Naive thymus-derived CD4-positive, alpha-beta T cell (primary cell): ENCODE measurements at regions of chr5 and their contacts with region 1.

Region 1: GRCh38 chr5:142012792-142013388 is at the start of gene GNPDA1:
- DNase-seq: peak; percentile 38 to 81 (median 54)
- ATAC-seq: peak; percentile 87
- H3K4me3 ChIP-seq: peak within 1 kb of the TSS; percentile 68
- H3K4me3 Mint-ChIP-seq: peak within 1 kb of the TSS; percentile 76 to 93 (median 88)
- H3K27ac ChIP-seq: peak within 1 kb of the TSS; percentile 76
- H3K27ac Mint-ChIP-seq: peak within 1 kb of the TSS; percentile 87 to 93 (median 90)
- H3K4me1 ChIP-seq: peaks cover 40 to 53% of the 10 kb centered on the region in 2 donors
- H3K4me1 Mint-ChIP-seq: peaks cover 34 to 86% (median 80%) of the 10 kb centered on the region in 7 donors
- H3K27me3 ChIP-seq: no peaks in the 10 kb centered on the region
- H3K27me3 Mint-ChIP-seq: no peaks in the 10 kb centered on the region
- total RNA-seq, gene GNPDA1: 13.3 to 60.4 (median 26.4) TPM

Region 2: DNA sequence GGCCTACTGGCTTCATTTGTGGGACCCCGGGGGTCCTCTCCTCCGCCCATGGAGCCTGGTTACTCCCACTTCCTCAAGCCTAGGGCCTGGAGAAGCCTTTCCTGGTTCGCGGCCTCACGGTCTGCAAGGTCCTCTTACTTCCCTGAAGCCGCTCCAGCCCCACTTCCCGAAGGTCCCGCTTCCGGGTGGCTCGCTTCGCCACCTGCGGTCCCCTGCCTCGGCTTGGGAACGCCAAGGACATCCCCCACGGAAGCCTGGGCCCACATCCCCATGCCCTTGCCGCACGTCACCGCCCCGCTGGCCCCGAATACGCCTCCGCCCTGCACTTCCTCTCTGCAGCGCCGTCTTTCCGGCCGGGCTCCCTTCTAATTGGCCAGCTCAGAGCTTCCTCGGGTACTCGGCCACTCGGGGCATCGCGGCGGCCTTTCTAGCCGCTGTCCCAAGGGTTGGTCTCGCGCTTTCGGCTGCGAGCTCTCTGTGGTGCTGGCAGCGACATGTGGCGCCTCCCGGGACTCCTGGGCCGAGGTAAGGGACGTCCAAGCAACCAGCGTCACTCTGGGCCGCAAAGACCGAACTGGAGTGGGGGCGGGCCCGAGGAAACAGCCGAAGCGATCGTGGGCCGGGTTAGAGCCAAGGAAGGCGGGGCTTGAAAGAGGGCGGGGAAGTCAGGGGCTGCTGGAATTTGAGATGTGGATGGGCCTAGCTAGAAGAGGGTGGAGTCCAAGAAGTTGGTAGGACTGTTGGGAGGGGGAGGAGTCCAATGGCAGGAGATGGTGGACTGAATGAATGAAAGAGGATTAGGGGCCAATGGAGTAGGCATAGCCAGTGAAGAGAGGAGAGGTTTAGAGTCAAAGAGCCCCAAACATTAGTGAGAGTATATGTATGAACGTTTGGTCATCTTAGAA is 89.2 kb before region 1 on chr5 and contains the start of gene DELE1:
- CTCF ChIA-PET with region 1: no interaction called
- POLR2A ChIA-PET with region 1: no interaction called
- intact Hi-C with region 1: loop called (anchors 5 kb)
- DNase-seq: peak; percentile 79 to 92 (median 90)
- ATAC-seq: peak; percentile 97
- H3K4me3 ChIP-seq: peak within 1 kb of the TSS; percentile 81
- H3K4me3 Mint-ChIP-seq: peak within 1 kb of the TSS; percentile 88 to 98 (median 94)
- H3K27ac ChIP-seq: peak within 1 kb of the TSS; percentile 98
- H3K27ac Mint-ChIP-seq: peak within 1 kb of the TSS; percentile 87 to 99 (median 98)
- H3K4me1 ChIP-seq: peaks cover 10 to 14% of the 10 kb centered on the region in 2 donors
- H3K4me1 Mint-ChIP-seq: peaks cover 23 to 54% (median 36%) of the 10 kb centered on the region in 7 donors
- H3K27me3 ChIP-seq: no peaks in the 10 kb centered on the region
- H3K27me3 Mint-ChIP-seq: no peaks in the 10 kb centered on the region
- total RNA-seq, gene DELE1: 77.3 to 101 (median 88.2) TPM

Region 3: DNA sequence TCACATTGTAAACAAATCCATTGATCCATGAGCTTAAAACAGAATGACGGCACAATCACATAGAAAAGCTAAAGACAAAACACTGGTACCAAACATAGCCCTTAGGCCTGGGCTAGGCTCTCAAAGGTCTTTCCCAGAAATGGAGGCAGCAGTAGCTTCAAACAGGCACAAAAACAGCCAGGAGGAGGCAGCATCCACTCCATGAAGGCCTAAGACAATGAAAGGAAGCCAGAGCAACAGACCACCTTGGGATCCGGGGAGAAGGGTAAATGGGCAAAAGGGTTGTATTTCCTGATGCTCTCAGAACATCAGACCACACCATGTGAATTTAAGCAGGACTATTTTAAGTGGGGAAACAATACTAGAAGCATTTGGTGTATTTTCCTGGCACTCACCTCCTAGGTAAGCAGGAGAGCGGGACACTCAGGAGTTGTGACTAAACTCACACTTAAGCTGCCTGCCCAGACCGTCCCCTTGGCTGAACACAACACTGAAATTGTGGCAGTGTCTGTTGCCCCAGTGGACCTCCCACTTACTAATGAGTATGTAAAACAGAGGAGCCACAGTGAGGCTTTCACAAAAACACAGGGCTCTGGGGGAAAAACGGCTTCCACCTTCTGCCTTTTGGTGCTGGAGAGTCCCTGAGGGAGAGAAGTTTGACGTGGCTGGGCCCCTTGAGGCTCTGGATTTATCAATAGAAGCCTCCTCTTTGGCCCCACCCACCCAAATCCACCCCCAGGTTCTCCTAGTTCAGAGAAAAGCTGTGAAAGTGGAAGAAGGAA is 12.0 kb before region 1 on chr5:
- CTCF ChIA-PET with region 1: interaction called, 16 read pairs
- POLR2A ChIA-PET with region 1: interaction called, 17 read pairs
- intact Hi-C with region 1: loop called (anchors 1 to 2 kb)
- DNase-seq: no peak
- ATAC-seq: no peak
- H3K4me3 ChIP-seq: no peak overlapping the region
- H3K4me3 Mint-ChIP-seq: no peak overlapping the region
- H3K27ac ChIP-seq: no peak overlapping the region
- H3K27ac Mint-ChIP-seq: peak overlapping the region in 7 of 9 donors; percentile 3 to 77 (median 19)
- H3K4me1 ChIP-seq: peaks cover 0 to 27% of the 10 kb centered on the region in 2 donors
- H3K4me1 Mint-ChIP-seq: peaks cover 19 to 47% (median 29%) of the 10 kb centered on the region in 7 donors
- H3K27me3 ChIP-seq: no peaks in the 10 kb centered on the region
- H3K27me3 Mint-ChIP-seq: no peaks in the 10 kb centered on the region

Region 4: GRCh38 chr5:142095651-142096330 is 82.9 kb after region 1 on chr5:
- CTCF ChIA-PET with region 1: interaction called, 9 read pairs
- POLR2A ChIA-PET with region 1: interaction called, 7 read pairs
- intact Hi-C with region 1: loop called in 1 of 2 experiments (anchors 1 kb)
- DNase-seq: peak; percentile 33 to 96 (median 92)
- ATAC-seq: peak; percentile 97
- H3K4me3 ChIP-seq: peak overlapping the region; percentile 3
- H3K4me3 Mint-ChIP-seq: peak overlapping the region; percentile 49 to 85 (median 70)
- H3K27ac ChIP-seq: peak overlapping the region; percentile 88
- H3K27ac Mint-ChIP-seq: peak overlapping the region; percentile 79 to 100 (median 96)
- H3K4me1 ChIP-seq: peaks cover 22 to 66% of the 10 kb centered on the region in 2 donors
- H3K4me1 Mint-ChIP-seq: peaks cover 25 to 97% (median 80%) of the 10 kb centered on the region in 7 donors
- H3K27me3 ChIP-seq: no peaks in the 10 kb centered on the region
- H3K27me3 Mint-ChIP-seq: no peaks in the 10 kb centered on the region

Region 5: GRCh38 chr5:142175039-142175438 is 162.1 kb after region 1 on chr5:
- CTCF ChIA-PET with region 1: no interaction called
- POLR2A ChIA-PET with region 1: no interaction called
- intact Hi-C with region 1: no loop called
- DNase-seq: no peak
- ATAC-seq: no peak
- H3K4me3 ChIP-seq: no peak overlapping the region
- H3K4me3 Mint-ChIP-seq: no peak overlapping the region
- H3K27ac ChIP-seq: no peak overlapping the region
- H3K27ac Mint-ChIP-seq: no peak overlapping the region
- H3K4me1 ChIP-seq: no peaks in the 10 kb centered on the region
- H3K4me1 Mint-ChIP-seq: peaks cover 0 to 3% (median 0%) of the 10 kb centered on the region in 7 donors
- H3K27me3 ChIP-seq: no peaks in the 10 kb centered on the region
- H3K27me3 Mint-ChIP-seq: peaks cover 0 to 13% (median 5%) of the 10 kb centered on the region in 5 donors

Region 6: GRCh38 chr5:142221091-142221860 is 208.4 kb after region 1 on chr5:
- CTCF ChIA-PET with region 1: no interaction called
- POLR2A ChIA-PET with region 1: no interaction called
- intact Hi-C with region 1: loop called (anchors 5 to 10 kb)
- DNase-seq: no peak
- ATAC-seq: no peak
- H3K4me3 ChIP-seq: no peak overlapping the region
- H3K4me3 Mint-ChIP-seq: peak overlapping the region in 3 of 10 donors; percentile 17 to 31 (median 19)
- H3K27ac ChIP-seq: no peak overlapping the region
- H3K27ac Mint-ChIP-seq: peak overlapping the region in 3 of 9 donors; percentile 3 to 52 (median 6)
- H3K4me1 ChIP-seq: peaks cover 6 to 25% of the 10 kb centered on the region in 2 donors
- H3K4me1 Mint-ChIP-seq: peaks cover 18 to 39% (median 34%) of the 10 kb centered on the region in 7 donors
- H3K27me3 ChIP-seq: no peaks in the 10 kb centered on the region
- H3K27me3 Mint-ChIP-seq: peaks cover 0 to 10% (median 0%) of the 10 kb centered on the region in 5 donors